Activated B cell treated with CpG ODN at 0.5 μM for 24 hours (primary cell): ENCODE measurements at regions of chr1 and their contacts with region 1.

Region 1: DNA sequence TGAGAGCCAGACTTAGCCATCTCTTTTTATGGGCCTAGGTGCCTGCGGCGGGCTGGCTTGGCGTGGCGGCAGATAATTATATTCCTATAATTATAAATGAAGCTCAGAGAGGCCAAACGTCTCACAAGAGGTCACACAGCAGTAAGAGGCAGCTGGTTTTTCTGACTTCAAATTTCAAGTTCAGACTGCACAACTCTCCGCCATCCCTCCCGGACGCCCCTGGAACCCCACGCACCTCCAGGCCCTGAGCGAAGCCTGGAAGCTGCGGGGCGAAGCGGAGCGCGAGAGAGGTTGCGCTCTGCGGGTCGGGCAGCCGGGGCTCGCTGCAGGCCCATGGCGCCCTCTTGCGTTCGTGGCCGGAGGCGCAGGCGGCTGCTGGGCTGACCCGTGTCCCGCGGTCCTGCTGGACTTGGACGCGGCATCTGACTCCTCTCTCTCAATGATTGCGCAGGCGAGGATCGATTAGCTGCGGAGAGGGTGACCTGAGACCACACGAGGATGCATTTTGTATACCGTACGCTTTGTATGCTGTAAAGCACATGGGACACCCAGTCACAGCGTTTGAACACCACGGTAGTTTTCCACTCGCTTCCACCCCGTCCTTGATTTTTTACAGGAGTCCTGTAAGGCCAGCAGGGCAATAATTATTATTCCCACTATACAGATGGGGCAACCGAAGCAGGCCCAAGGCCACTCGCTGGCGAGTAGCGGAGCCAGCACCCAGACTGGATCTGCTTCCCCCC is 272.7 kb downstream of the FOXD2 start:
- DNase-seq: peak; percentile 56
- ATAC-seq: peak; percentile 52
- H3K4me3 Mint-ChIP-seq: no peak overlapping the region
- H3K27ac Mint-ChIP-seq: no peak overlapping the region
- H3K4me1 Mint-ChIP-seq: peaks cover 15% of the 10 kb centered on the region
- H3K27me3 Mint-ChIP-seq: peaks cover 62% of the 10 kb centered on the region
- CTCF ChIP-seq: peak; percentile 57

Region 2: DNA sequence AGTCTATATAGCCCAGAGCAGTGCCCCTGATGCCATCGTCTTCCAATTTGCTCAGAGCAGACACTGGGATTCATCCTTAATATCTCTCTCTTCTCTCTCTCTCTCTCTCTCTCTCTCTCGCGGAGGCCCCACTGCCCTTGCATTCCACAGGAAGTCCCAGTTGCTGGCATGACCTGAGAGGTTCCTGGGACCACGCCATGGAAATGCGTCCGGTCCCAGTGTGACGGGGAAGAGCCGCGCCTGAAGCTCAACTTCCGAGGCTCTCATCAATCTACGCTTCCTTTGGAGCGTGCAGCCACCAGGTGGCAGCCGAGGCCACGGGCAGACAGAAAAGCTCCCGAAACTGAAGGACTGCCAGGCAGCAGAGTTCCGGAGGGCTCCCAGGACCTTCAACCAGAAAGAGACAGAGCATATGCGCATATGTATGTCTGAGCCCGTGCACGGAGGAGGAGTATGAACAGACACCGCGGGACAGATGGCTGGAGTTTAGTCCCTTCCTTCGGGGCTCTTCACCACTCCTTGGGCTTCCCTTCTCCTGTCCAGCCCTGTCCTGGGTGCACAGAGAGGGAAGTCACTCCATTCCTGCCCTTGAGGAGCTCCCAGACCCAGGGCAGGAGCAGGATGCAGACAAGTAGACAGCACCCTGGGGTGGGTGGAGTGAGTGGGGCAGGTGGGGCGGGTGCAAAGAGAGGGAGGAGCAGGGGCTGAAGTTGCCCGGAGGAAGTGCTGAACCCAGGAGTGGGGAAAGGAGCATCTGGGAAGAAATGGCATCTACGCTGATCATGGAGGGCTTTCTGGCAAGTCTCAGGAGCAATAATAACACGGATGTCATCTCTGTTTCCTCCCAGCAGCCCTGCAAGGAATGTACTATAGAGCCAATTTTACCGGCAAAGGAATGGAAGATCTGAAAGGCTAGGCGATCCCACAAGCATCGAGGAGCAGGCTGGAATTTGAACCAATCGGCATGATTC is 531.2 kb before region 1 on chr1:
- CTCF ChIA-PET with region 1: interaction called, 10 read pairs
- POLR2A ChIA-PET with region 1: no interaction called
- intact Hi-C with region 1: loop called (anchors 1 kb)
- DNase-seq: peak; percentile 55
- ATAC-seq: peak; percentile 70
- H3K4me3 Mint-ChIP-seq: peak overlapping the region; percentile 82
- H3K27ac Mint-ChIP-seq: no peak overlapping the region
- H3K4me1 Mint-ChIP-seq: peaks cover 11% of the 10 kb centered on the region
- H3K27me3 Mint-ChIP-seq: peaks cover 32% of the 10 kb centered on the region
- CTCF ChIP-seq: no peak

Region 3: GRCh38 chr1:47388891-47389238 is 321.6 kb before region 1 on chr1:
- CTCF ChIA-PET with region 1: interaction called, 10 read pairs
- POLR2A ChIA-PET with region 1: no interaction called
- intact Hi-C with region 1: loop called (anchors 1 kb)
- DNase-seq: no peak
- ATAC-seq: no peak
- H3K4me3 Mint-ChIP-seq: no peak overlapping the region
- H3K27ac Mint-ChIP-seq: no peak overlapping the region
- H3K4me1 Mint-ChIP-seq: no peaks in the 10 kb centered on the region
- H3K27me3 Mint-ChIP-seq: peaks cover 14% of the 10 kb centered on the region
- CTCF ChIP-seq: no peak